ENCODE measurements at regions of chr20 and their contacts with region 1.

Region 1: GRCh38 chr20:18973529-18974173 is 160.1 kb downstream of the SCP2D1 start:
- DNase-seq: no peak
- H3K4me3 ChIP-seq: no peak overlapping the region
- H3K27ac ChIP-seq: no peak overlapping the region
- H3K4me1 ChIP-seq: no peaks in the 10 kb centered on the region
- CTCF ChIP-seq: no peak

Region 2: DNA sequence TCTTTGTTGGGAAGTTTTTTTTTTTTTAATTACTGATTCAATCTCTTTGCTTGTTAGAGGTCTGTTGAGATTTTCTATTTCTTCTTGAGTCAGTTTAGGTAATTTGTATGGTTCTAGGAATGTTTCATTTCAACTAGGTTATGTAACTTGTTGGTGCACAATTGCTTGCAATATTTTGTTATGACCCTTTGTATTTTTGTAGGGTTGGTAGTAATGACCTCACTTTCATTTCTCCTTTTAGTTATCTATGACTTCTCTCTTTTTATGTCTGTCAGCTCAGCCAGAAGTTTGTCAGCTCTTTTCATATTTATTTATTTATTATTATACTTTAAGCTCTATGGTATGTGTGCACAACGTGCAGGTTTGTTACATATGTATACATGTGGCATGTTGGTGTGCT is 187.7 kb after region 1 on chr20:
- CTCF ChIA-PET with region 1: no interaction called
- POLR2A ChIA-PET with region 1: no interaction called
- intact Hi-C with region 1: no loop called
- DNase-seq: no peak
- H3K4me3 ChIP-seq: no peak overlapping the region
- H3K27ac ChIP-seq: no peak overlapping the region
- H3K4me1 ChIP-seq: no peaks in the 10 kb centered on the region
- CTCF ChIP-seq: no peak

Region 3: DNA sequence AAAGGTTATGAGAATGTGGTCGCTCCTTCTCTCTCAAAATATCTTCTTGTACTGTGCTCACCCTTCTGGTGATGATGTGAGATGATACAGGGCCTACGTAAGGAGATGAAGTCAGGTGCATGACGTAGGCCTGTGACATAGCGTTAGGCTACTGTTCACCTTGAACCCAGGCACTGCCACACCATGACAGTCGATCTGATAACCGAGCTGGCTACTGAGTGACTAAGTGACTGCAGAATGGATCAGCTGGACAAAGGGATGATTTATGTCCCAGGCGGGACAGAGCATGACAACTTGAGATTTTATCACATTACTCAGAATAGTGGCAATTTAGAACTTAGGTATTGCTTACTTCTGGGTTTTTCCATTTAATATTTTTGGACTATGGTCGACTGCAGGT is 250.0 kb after region 1 on chr20:
- CTCF ChIA-PET with region 1: no interaction called
- POLR2A ChIA-PET with region 1: interaction called, 3 read pairs
- intact Hi-C with region 1: loop called (anchors 10 kb)
- DNase-seq: no peak
- H3K4me3 ChIP-seq: no peak overlapping the region
- H3K27ac ChIP-seq: no peak overlapping the region
- H3K4me1 ChIP-seq: no peaks in the 10 kb centered on the region
- CTCF ChIP-seq: no peak